ENCODE measurements at regions of chr17 and their contacts with region 1.

Region 1: DNA sequence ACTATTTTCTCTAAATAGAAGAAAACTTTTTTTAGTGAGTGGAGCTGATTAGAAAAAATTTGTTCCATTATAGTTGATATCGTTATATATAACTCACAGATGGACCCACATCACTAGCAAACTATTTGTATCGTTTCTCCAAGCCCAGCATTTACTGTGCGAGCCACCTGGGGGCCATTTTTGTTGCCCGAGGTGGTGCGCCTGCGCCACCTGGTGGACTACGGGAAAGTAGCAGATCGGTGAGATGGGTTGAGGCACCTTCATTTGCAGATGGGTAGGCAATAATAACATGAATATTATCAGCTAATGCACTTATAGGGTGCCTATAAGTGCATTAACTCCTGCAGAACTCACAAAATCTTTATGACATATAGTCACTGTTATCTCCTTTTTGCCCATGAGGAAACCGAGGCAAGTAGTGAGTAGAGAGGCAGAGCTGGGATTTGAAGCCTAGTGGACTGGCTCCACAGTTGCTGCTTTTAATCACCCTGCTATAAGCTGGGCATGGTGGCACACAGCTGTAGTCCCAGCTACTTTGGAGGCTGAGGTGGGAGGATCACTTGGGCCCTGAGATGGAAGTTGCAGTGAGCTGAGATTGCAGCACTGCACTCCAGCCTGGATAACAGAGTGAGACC is 23.2 kb upstream of the NTN1 start:
- DNase-seq: peak; percentile 75 to 80 (median 77)
- H3K4me3 ChIP-seq: no peak overlapping the region
- H3K4me3 Mint-ChIP-seq: no peak overlapping the region
- H3K27ac ChIP-seq: no peak overlapping the region
- H3K27ac Mint-ChIP-seq: peak overlapping the region in 1 of 7 donors; percentile 32
- H3K4me1 ChIP-seq: peaks cover 5% of the 10 kb centered on the region
- H3K4me1 Mint-ChIP-seq: peaks cover 8 to 16% (median 12%) of the 10 kb centered on the region in 4 donors
- H3K27me3 ChIP-seq: no peaks in the 10 kb centered on the region
- H3K27me3 Mint-ChIP-seq: peaks cover 22 to 26% of the 10 kb centered on the region in 2 donors

Region 2: DNA sequence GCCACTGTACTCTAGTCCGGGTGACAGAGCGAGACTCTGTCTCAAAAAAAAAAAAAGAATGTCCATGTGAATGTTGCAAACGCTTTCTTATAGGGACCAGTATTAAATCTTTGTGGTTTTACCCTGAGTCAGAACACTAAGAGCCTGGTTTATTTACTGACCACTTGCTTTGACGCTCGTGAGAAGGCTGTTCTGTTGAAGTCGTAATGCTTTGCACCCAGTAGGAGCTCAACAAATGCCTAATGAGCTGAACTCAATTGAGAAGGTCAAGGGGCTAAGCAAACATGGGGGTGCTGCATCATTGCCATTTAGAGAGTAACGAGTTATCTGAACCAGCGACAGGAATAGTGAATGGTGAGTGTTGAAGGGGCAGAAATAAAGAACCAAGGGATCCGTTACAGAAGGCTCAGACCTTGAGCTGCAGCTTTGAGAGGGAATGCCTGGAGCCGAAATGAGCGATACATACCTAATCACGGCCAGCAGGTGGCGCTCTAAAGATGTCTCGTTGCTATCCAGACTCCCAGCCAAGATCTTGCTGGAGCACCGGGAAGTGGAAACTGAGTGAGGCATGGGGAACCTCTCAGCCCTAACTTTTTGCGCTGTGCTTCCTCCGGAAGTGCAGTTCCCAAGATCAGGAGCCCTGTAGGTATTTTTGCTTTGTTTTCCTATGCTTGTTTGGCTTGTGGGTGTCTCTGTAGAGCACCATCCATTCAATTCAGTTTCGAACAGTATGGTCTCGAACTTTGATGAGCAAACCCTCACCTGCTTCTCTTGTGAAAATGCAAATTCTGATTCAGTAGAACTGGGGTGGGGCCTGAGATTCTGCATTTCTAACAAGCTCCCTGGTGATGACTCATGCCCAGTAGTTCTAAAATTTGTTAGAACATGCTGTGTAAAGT is 587.9 kb before region 1 on chr17:
- CTCF ChIA-PET with region 1: interaction called, 7 read pairs
- POLR2A ChIA-PET with region 1: no interaction called
- intact Hi-C with region 1: loop called (anchors 1 kb)
- DNase-seq: peak; percentile 69 to 73 (median 71)
- H3K4me3 ChIP-seq: no peak overlapping the region
- H3K4me3 Mint-ChIP-seq: peak overlapping the region in 2 of 8 donors; percentile 3 to 57
- H3K27ac ChIP-seq: no peak overlapping the region
- H3K27ac Mint-ChIP-seq: peak overlapping the region in 1 of 7 donors; percentile 57
- H3K4me1 ChIP-seq: peaks cover 20% of the 10 kb centered on the region
- H3K4me1 Mint-ChIP-seq: peaks cover 11 to 22% (median 15%) of the 10 kb centered on the region in 4 donors
- H3K27me3 ChIP-seq: no peaks in the 10 kb centered on the region
- H3K27me3 Mint-ChIP-seq: peaks cover 7 to 8% of the 10 kb centered on the region in 2 donors

Region 3: GRCh38 chr17:8753976-8754440 is 244.1 kb before region 1 on chr17:
- CTCF ChIA-PET with region 1: interaction called, 5 read pairs
- POLR2A ChIA-PET with region 1: no interaction called
- intact Hi-C with region 1: loop called (anchors 1 kb)
- DNase-seq: no peak
- H3K4me3 ChIP-seq: no peak overlapping the region
- H3K4me3 Mint-ChIP-seq: no peak overlapping the region
- H3K27ac ChIP-seq: no peak overlapping the region
- H3K27ac Mint-ChIP-seq: no peak overlapping the region
- H3K4me1 ChIP-seq: no peaks in the 10 kb centered on the region
- H3K4me1 Mint-ChIP-seq: no peaks in the 10 kb centered on the region
- H3K27me3 ChIP-seq: no peaks in the 10 kb centered on the region
- H3K27me3 Mint-ChIP-seq: peaks cover 8 to 16% of the 10 kb centered on the region in 2 donors

Region 4: DNA sequence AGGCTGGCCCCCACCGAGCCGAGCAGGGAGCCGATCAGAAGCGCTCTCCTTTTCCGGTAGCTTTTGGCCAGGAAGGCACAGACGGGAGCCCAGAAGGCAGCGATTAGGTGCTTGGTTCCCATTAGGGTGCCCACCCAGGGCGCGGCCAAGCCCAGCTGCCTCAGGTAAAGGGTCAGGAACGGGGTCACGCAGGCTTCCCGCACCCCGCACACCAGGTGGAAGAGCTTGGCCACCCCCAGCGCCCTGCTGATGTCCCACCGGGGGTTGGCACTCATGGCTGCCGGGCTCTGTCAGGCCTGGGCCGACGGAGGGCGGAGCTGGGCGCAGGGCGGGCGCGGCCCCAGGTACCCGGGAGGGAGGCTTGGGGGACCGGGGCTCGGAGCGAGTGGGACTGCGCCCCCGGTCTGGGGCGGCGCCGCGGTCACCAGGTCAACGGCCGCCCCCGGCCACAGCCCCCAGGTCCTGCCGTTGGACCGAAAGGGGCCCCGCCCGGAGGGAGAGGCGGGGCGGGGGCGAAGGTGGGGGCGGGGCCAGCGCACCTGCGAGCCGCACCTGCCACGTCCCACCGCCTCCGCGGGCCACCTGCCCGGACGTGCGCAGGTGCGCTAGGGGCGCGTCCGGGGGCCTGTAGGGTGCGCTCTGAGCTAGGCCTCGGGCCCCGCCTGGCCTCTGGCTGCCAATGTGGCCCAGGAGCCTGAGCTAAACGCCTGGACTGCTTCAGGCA is 199.1 kb before region 1 on chr17 and contains the start of gene MFSD6L:
- CTCF ChIA-PET with region 1: interaction called, 10 read pairs
- POLR2A ChIA-PET with region 1: no interaction called
- intact Hi-C with region 1: no loop called
- DNase-seq: no peak
- H3K4me3 ChIP-seq: no peak within 1 kb of the TSS
- H3K4me3 Mint-ChIP-seq: no peak within 1 kb of the TSS
- H3K27ac ChIP-seq: no peak within 1 kb of the TSS
- H3K27ac Mint-ChIP-seq: no peak within 1 kb of the TSS
- H3K4me1 ChIP-seq: no peaks in the 10 kb centered on the region
- H3K4me1 Mint-ChIP-seq: no peaks in the 10 kb centered on the region
- H3K27me3 ChIP-seq: no peaks in the 10 kb centered on the region
- H3K27me3 Mint-ChIP-seq: peaks cover 0 to 3% of the 10 kb centered on the region in 2 donors
- total RNA-seq, gene MFSD6L: not detected

Region 5: GRCh38 chr17:8900626-8901585 is 97.2 kb before region 1 on chr17:
- CTCF ChIA-PET with region 1: interaction called, 39 read pairs
- POLR2A ChIA-PET with region 1: no interaction called
- intact Hi-C with region 1: loop called (anchors 2 kb)
- DNase-seq: no peak
- H3K4me3 ChIP-seq: no peak overlapping the region
- H3K4me3 Mint-ChIP-seq: peak overlapping the region in 6 of 8 donors; percentile 18 to 86 (median 52)
- H3K27ac ChIP-seq: peak overlapping the region; percentile 82
- H3K27ac Mint-ChIP-seq: peak overlapping the region; percentile 96 to 100 (median 98)
- H3K4me1 ChIP-seq: peaks cover 59% of the 10 kb centered on the region
- H3K4me1 Mint-ChIP-seq: peaks cover 52 to 75% (median 65%) of the 10 kb centered on the region in 4 donors
- H3K27me3 ChIP-seq: no peaks in the 10 kb centered on the region
- H3K27me3 Mint-ChIP-seq: no peaks in the 10 kb centered on the region

Region 6: DNA sequence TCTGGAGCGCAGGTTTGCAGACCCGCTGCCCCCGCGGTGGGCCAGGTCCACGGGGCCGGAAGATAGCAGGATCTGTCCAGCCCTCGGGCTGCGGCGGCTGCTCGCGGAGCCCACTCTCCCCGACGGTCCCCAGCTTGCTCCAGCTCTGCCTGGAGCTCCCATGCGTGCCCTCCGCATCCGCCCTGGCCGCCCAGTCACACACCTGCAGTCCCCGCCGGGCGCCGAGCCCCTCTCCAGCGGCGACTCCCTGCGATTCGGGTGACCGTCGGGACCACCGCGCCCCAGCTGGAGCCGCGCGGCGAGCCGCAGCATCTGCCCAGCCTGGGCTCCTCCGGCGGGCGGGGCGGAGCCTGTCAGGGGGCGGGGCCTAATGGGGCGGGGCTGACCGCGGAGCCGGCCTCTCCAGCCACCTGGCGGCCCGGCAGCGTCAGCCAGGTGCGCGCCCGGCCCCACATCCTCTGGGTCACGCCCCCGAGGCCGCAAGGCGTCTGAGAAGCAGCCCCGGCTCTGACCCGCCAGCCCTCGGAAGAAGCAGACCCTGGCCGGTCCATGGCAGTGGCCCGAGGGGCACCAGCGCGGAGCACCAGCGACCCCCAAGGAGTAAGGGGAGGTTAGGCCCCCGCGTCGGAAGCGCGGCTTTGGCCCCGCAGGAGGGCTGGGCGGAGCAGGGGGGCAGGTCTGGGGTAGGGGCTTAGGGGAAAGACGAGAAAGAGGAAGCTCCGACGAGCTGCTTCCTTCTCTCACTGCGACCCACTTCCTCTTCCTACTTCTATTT is 32.5 kb before region 1 on chr17 and contains the start of gene PIK3R5:
- CTCF ChIA-PET with region 1: interaction called, 11 read pairs
- POLR2A ChIA-PET with region 1: no interaction called
- intact Hi-C with region 1: no loop called
- DNase-seq: peak; percentile 73 to 83 (median 78)
- H3K4me3 ChIP-seq: peak within 1 kb of the TSS; percentile 74 to 99
- H3K4me3 Mint-ChIP-seq: peak within 1 kb of the TSS; percentile 97 to 100 (median 98)
- H3K27ac ChIP-seq: peak within 1 kb of the TSS; percentile 79
- H3K27ac Mint-ChIP-seq: peak within 1 kb of the TSS; percentile 92 to 100 (median 96)
- H3K4me1 ChIP-seq: peaks cover 45% of the 10 kb centered on the region
- H3K4me1 Mint-ChIP-seq: peaks cover 35 to 46% (median 39%) of the 10 kb centered on the region in 4 donors
- H3K27me3 ChIP-seq: no peaks in the 10 kb centered on the region
- H3K27me3 Mint-ChIP-seq: no peaks in the 10 kb centered on the region
- total RNA-seq, gene PIK3R5: 85.1 to 89.4 TPM

Region 7: GRCh38 chr17:9028202-9028987 is 30.3 kb after region 1 on chr17:
- CTCF ChIA-PET with region 1: no interaction called
- POLR2A ChIA-PET with region 1: no interaction called
- intact Hi-C with region 1: no loop called
- DNase-seq: no peak
- H3K4me3 ChIP-seq: no peak overlapping the region
- H3K4me3 Mint-ChIP-seq: no peak overlapping the region
- H3K27ac ChIP-seq: no peak overlapping the region
- H3K27ac Mint-ChIP-seq: no peak overlapping the region
- H3K4me1 ChIP-seq: peaks cover 4% of the 10 kb centered on the region
- H3K4me1 Mint-ChIP-seq: peaks cover 2 to 16% (median 9%) of the 10 kb centered on the region in 4 donors
- H3K27me3 ChIP-seq: peaks cover 27% of the 10 kb centered on the region
- H3K27me3 Mint-ChIP-seq: peaks cover 44 to 60% of the 10 kb centered on the region in 2 donors